Heart right ventricle (tissue), 16 donors: ENCODE measurements at regions of chr18 and their contacts with region 1.

Region 1: GRCh38 chr18:21704603-21705364 is at the start of gene ABHD3:
- DNase-seq: peak; percentile 92 to 95
- ATAC-seq: peak; percentile 99 to 100 (median 100)
- H3K4me3 ChIP-seq: peak within 1 kb of the TSS; percentile 64 to 96 (median 84)
- H3K27ac ChIP-seq: peak within 1 kb of the TSS in 9 of 10 donors; percentile 85 to 95 (median 89)
- H3K4me1 ChIP-seq: peaks cover 0 to 24% (median 13%) of the 10 kb centered on the region in 9 donors
- H3K27me3 ChIP-seq: no peaks in the 10 kb centered on the region
- CTCF ChIP-seq: peak; percentile 24 to 70 (median 42)
- total RNA-seq, gene ABHD3: 2.2 to 7.7 (median 3.7) TPM

Region 2: DNA sequence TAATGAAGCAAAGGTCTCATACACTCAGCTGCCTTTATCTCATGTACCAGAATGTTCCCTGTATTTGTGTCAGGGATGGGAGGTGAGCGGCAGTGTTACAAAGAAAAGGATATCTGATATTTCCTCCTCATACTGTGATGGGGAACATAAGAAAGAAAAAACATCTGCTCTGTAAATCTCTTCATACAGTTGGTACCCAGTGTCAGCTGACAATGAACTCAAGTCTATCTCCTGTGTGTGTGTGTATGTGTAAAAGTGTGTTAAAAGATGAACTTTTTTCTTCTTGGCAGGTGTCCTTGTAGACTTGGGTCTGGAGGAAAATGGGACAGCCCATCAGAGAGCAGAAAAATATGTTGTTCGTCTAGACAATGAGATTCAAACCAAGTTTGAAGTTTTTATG is 232.0 kb before region 1 on chr18:
- intact Hi-C with region 1: no loop called
- DNase-seq: no peak
- ATAC-seq: no peak
- H3K4me3 ChIP-seq: no peak overlapping the region
- H3K27ac ChIP-seq: no peak overlapping the region
- H3K4me1 ChIP-seq: no peaks in the 10 kb centered on the region
- H3K27me3 ChIP-seq: no peaks in the 10 kb centered on the region
- CTCF ChIP-seq: no peak

Region 3: DNA sequence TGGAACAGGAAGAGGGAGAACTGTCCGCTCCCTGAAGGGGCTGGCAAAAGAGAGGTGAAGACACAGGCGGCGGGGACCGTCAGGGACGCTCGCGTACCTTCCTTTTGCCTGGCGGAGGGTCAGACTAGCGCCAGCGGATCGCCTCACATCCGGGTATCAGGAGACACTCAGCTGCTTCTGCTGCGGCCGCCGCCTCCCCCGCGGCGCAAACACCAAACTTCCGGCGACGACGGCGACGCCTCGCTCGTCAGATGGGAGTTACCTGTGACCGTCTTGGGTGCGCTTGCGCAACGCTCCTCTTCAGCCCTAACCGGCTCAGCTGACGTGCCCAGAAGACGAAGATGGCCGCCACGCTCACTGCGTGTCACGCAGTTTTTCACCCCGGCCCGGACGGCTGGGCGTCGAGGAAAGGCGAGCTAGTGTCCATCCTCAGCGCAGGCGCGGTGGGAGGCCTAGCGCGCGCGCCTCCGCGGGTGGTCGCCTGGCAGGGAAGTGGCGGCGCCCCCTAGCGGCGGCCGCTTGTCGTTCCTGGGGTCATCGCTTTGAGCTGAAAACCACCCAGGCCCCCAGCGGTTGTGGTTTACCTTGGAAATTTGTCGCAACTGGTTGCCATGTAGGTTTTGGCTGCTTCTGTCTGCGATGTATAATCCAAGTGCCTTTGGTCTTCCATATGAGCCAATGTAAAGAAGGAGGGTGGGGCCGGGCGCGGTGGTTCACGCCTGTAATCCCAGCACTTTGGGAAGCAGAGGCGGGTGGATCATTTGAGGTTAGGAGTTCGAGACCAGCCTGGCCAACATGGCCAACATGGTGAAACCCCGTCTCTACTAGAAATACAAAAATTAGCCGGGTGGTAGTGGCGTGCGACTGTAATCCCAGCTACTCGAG is 104.0 kb before region 1 on chr18 and contains the start of gene ESCO1:
- intact Hi-C with region 1: loop called in 1 of 10 experiments (anchors 5 kb)
- DNase-seq: peak; percentile 93
- ATAC-seq: peak; percentile 94 to 97 (median 96)
- H3K4me3 ChIP-seq: peak within 1 kb of the TSS; percentile 81 to 100 (median 92)
- H3K27ac ChIP-seq: peak within 1 kb of the TSS; percentile 86 to 99 (median 97)
- H3K4me1 ChIP-seq: peaks cover 0 to 46% (median 24%) of the 10 kb centered on the region in 9 donors
- H3K27me3 ChIP-seq: no peaks in the 10 kb centered on the region
- CTCF ChIP-seq: peak; percentile 93 to 100 (median 98)
- total RNA-seq, gene ESCO1: 8.7 to 12.9 (median 9.9) TPM

Region 4: GRCh38 chr18:21629089-21629832 is 75.5 kb before region 1 on chr18:
- intact Hi-C with region 1: loop called in 1 of 10 experiments (anchors 10 kb)
- DNase-seq: no peak
- ATAC-seq: no peak
- H3K4me3 ChIP-seq: no peak overlapping the region
- H3K27ac ChIP-seq: no peak overlapping the region
- H3K4me1 ChIP-seq: no peaks in the 10 kb centered on the region
- H3K27me3 ChIP-seq: no peaks in the 10 kb centered on the region
- CTCF ChIP-seq: no peak

Region 5: DNA sequence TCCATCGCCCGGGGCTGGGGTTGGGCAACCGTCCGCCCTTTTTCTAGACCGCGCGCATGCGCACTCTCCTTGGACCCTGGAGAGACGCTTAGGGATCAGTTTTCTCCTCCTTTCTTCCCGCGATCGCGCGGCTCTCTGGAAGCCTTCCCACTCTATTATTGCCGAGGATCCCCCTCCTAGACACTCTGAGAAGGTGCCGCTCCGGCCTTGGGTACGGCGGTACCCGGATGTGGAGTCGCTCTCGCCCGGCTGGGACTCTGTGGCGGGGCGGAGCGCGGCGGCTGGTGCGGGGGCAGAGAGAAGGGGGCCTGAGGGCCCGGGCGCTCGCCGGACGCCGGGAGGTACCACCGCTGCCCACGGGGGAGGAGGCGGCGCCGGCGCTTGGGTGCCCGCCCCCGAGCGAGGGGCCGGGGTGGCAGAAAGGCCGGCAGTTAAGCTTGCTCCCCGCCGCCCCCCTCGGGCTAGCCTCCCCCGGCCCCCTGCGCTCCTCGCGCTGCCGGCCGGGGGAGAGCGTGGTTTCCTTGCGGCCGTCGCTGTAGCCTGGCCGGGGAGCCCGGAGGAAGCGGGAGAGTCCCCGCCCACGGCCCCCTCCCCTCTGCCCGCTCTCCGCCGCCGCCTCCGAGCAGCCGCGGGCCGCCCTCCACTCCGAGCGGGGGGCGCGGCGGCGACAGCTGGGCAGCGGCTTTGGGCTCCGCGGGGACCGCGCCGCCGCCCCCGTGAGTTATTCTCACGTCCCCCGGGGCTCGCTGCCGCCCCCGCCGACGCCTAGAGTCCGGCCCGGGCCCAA is 36.1 kb after region 1 on chr18 and contains the start of gene MIB1:
- intact Hi-C with region 1: loop called in 3 of 10 experiments (anchors 1 to 5 kb)
- DNase-seq: peak; percentile 64 to 99
- ATAC-seq: peak; percentile 81 to 95 (median 86)
- H3K4me3 ChIP-seq: peak within 1 kb of the TSS; percentile 66 to 99 (median 89)
- H3K27ac ChIP-seq: peak within 1 kb of the TSS; percentile 83 to 99 (median 98)
- H3K4me1 ChIP-seq: peaks cover 0 to 44% (median 14%) of the 10 kb centered on the region in 9 donors
- H3K27me3 ChIP-seq: no peaks in the 10 kb centered on the region
- CTCF ChIP-seq: peak in 1 of 9 donors; percentile 6
- total RNA-seq, gene MIB1: 16.8 to 32.2 (median 26.2) TPM

Region 6: DNA sequence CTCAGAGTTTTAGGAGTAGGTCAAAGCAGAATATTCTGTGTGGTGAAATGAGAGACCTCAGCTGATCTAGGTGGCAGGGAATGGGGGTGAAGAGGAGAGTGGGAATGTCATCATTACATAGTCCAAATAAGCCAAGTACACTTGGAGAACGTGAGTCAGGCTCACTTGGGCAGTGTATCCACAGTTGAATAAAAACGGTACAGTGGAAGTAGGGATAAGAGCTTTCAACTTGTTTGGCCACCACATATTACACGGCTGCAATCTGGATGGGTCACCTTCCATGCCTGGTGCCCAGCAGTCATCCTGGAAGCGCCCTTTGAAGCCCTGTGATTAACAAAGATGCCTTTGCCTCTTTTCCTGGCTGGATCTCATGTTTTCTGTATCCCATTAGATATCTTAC is 64.4 kb after region 1 on chr18:
- intact Hi-C with region 1: loop called in 2 of 10 experiments (anchors 2 to 10 kb)
- DNase-seq: no peak
- ATAC-seq: no peak
- H3K4me3 ChIP-seq: no peak overlapping the region
- H3K27ac ChIP-seq: no peak overlapping the region
- H3K4me1 ChIP-seq: peaks cover 0 to 12% (median 3%) of the 10 kb centered on the region in 9 donors
- H3K27me3 ChIP-seq: no peaks in the 10 kb centered on the region
- CTCF ChIP-seq: no peak